ENCODE measurements at regions of chrX and their contacts with region 1.

Region 1: GRCh38 chrX:19739683-19740082 is 147.7 kb downstream of the SH3KBP1 start:
- DNase-seq: peak; percentile 58
- H3K4me3 ChIP-seq: no peak overlapping the region
- H3K27ac ChIP-seq: no peak overlapping the region
- H3K4me1 ChIP-seq: peaks cover 74% of the 10 kb centered on the region
- CTCF ChIP-seq: peak; percentile 78

Region 2: GRCh38 chrX:19566359-19567222 is 173.1 kb before region 1 on chrX:
- CTCF ChIA-PET with region 1: no interaction called
- POLR2A ChIA-PET with region 1: no interaction called
- intact Hi-C with region 1: loop called (anchors 10 kb)
- DNase-seq: peak; percentile 87
- H3K4me3 ChIP-seq: peak overlapping the region; percentile 25
- H3K27ac ChIP-seq: peak overlapping the region; percentile 91
- H3K4me1 ChIP-seq: peaks cover 45% of the 10 kb centered on the region
- CTCF ChIP-seq: no peak

Region 3: GRCh38 chrX:19613645-19614323 is 125.9 kb before region 1 on chrX:
- CTCF ChIA-PET with region 1: no interaction called
- POLR2A ChIA-PET with region 1: no interaction called
- intact Hi-C with region 1: no loop called
- DNase-seq: no peak
- H3K4me3 ChIP-seq: no peak overlapping the region
- H3K27ac ChIP-seq: no peak overlapping the region
- H3K4me1 ChIP-seq: peaks cover 28% of the 10 kb centered on the region
- CTCF ChIP-seq: no peak

Region 4: GRCh38 chrX:19772826-19773628 is 33.3 kb after region 1 on chrX:
- CTCF ChIA-PET with region 1: no interaction called
- POLR2A ChIA-PET with region 1: interaction called, 7 read pairs
- intact Hi-C with region 1: loop called (anchors 5 kb)
- DNase-seq: peak; percentile 52
- H3K4me3 ChIP-seq: peak overlapping the region; percentile 62
- H3K27ac ChIP-seq: peak overlapping the region; percentile 100
- H3K4me1 ChIP-seq: peaks cover 89% of the 10 kb centered on the region
- CTCF ChIP-seq: no peak

Region 5: DNA sequence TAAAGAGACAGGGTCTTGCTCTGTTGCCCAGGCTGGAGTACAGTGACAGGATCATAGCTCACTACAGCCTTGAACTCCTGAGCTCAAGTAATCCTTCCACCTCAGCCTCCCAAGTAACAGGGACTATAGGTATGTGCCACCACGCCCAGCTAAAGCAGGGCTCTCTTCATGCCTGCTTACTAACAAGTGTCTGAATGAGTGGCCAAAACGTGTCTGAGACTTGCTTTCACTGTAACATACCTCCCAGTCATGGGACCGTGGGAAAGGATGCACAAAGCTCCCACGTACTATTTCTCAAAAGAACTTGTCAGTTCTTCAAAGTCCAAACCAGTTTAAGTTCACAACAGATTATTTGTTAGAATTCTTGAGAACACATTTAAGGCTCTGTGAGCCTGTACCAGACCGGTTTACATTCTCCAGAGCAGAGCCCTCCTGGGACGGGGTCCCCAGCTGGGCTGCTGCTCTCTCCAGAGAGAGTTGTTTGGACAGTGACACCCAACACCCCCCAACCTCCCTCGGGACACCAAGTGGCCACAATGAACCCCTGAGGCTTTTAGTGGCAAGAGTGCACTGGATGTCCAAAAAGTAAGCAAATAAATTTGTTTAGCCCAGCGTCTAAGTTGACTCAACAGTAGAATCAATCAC is 123.7 kb after region 1 on chrX:
- CTCF ChIA-PET with region 1: no interaction called
- POLR2A ChIA-PET with region 1: interaction called, 9 read pairs
- intact Hi-C with region 1: loop called (anchors 5 kb)
- DNase-seq: peak; percentile 78
- H3K4me3 ChIP-seq: peak overlapping the region; percentile 59
- H3K27ac ChIP-seq: peak overlapping the region; percentile 96
- H3K4me1 ChIP-seq: peaks cover 96% of the 10 kb centered on the region
- CTCF ChIP-seq: no peak

Region 6: GRCh38 chrX:19990556-19991349 is 251.1 kb after region 1 on chrX and contains the start of gene BCLAF3:
- CTCF ChIA-PET with region 1: no interaction called
- POLR2A ChIA-PET with region 1: no interaction called
- intact Hi-C with region 1: loop called (anchors 2 kb)
- DNase-seq: peak; percentile 91
- H3K4me3 ChIP-seq: peak within 1 kb of the TSS; percentile 82
- H3K27ac ChIP-seq: no peak within 1 kb of the TSS
- H3K4me1 ChIP-seq: peaks cover 18% of the 10 kb centered on the region
- CTCF ChIP-seq: peak; percentile 75
- total RNA-seq, gene BCLAF3: 5.1 and 5.8 TPM in 2 replicates

Measured in OCI-LY7 (cell line).